A549 (cell line): ENCODE measurements at regions of chr10 and their contacts with region 1.

Region 1: GRCh38 chr10:84531396-84531795 is 203.0 kb downstream of the CCSER2 start:
- DNase-seq: no peak
- ATAC-seq: no peak
- H3K4me3 ChIP-seq: no peak overlapping the region
- H3K27ac ChIP-seq: no peak overlapping the region
- H3K4me1 ChIP-seq: no peaks in the 10 kb centered on the region
- CTCF ChIP-seq: no peak
- EP300 ChIP-seq: no peak
- POLR2A ChIP-seq: no peak
- RAD21 ChIP-seq: no peak

Region 2: GRCh38 chr10:84375011-84375410 is 156.4 kb before region 1 on chr10:
- CTCF ChIA-PET with region 1: interaction called, 101 read pairs
- POLR2A ChIA-PET with region 1: no interaction called
- DNase-seq: peak in 1 of 2 experiments; percentile 62
- ATAC-seq: peak; percentile 59 to 75; a peak in 3 of 6 replicates
- H3K4me3 ChIP-seq: no peak overlapping the region
- H3K27ac ChIP-seq: no peak overlapping the region
- H3K4me1 ChIP-seq: peaks cover 12% of the 10 kb centered on the region
- CTCF ChIP-seq: peak; percentile 83
- EP300 ChIP-seq: no peak
- POLR2A ChIP-seq: no peak
- RAD21 ChIP-seq: peak; percentile 82